Activated CD4-positive, alpha-beta memory T cell treated with anti-CD3 and anti-CD28 coated beads for 36 hours (primary cell): ENCODE measurements at regions of chr10 and their contacts with region 1.

Region 1: GRCh38 chr10:3708852-3709251 is 76.2 kb downstream of the KLF6 start:
- DNase-seq: peak; percentile 20
- H3K4me3 Mint-ChIP-seq: no peak overlapping the region
- H3K27ac Mint-ChIP-seq: peak overlapping the region; percentile 38
- H3K4me1 Mint-ChIP-seq: peaks cover 20% of the 10 kb centered on the region
- H3K27me3 Mint-ChIP-seq: peaks cover 2% of the 10 kb centered on the region

Region 2: DNA sequence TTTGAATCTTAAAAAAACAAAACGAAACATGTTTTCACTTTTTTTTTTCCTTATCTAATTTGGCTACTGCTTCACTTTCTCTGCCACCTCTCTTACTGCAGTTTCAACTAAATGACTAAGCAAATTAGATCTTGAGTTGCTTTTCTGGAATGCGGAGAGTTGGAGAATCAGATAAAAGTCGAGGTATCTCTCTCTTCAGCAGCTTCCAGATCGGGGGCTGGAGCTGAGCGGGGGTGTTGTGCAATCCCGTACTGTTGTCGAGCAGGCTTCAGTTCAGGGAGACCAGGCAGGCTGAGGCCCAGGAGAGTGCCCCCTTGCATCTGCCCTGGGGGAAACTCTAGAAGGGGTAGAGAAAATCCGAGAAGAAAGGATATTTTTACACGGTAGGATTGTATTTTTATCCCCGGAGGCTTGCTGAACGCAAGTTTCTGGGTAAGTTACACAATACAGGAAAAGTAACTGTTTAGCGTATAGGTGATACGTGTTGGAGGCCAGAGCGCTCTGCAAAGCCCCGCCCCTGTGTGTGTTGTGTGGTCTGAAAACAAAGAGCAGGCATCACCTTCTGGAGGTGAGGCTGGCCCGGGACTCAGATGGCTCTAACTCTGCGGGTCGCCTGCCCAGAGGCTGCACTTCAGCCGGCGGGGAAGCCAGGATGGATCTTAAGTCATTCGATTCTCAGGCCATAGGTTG is 40.4 kb before region 1 on chr10:
- CTCF ChIA-PET with region 1: no interaction called
- POLR2A ChIA-PET with region 1: no interaction called
- intact Hi-C with region 1: loop called (anchors 5 kb)
- DNase-seq: peak; percentile 76
- H3K4me3 Mint-ChIP-seq: peak overlapping the region; percentile 72
- H3K27ac Mint-ChIP-seq: peak overlapping the region; percentile 79
- H3K4me1 Mint-ChIP-seq: peaks cover 38% of the 10 kb centered on the region
- H3K27me3 Mint-ChIP-seq: no peaks in the 10 kb centered on the region